GM18951 (cell line): ENCODE measurements at regions of chr3 and their contacts with region 1.

Region 1: DNA sequence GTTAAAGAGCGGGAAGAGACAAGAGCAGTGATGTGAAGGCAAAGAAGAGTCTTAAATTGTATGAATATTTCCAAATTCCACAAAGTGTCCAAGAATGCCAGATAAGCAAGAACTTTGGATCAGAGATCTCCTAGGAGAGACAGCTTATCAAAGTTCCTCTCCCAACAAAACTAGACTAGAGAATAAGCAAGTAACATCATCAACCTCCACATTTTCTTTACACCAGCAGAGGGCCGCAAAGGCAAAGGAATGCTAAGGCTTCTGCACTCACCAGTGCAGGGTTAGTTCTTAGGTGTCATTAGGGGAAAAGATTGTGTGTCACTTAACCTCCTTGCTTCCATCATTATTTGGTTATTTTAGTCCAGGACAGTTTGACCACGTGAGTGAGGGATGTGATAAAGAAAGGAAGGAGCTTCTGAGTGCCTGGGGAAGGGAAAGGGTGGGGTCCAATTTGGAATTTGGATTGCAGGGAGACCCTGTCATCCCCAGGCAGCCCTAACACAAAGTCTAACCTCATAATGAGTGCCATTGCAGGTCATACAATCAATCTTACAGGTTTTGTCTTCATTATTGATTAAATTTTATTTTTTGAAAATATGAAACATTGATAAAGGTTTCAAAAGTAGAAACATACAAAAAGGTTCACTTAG is 7.5 kb upstream of the CMTM6 start:
- POLR2A ChIP-seq: no peak

Region 2: DNA sequence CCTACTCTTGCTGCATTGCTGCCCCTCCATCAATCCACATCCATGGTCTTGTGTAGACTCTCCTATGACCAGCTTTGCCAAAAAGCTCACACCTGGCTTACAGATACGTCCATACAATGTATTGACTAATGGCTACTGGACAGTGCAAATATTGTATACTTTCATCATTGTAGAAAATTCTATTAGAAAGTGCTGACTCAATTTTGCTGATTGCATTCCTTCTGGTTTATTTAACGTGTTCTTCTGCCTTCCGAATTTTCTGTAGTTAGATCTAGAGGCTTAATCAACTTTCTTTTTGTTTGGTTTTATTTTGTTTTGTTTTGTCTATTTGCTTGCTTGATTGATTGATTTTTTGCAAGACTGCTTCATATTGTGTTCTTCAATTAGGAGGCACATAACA is 145.0 kb after region 1 on chr3:
- in situ Hi-C with region 1: loop called (anchors 5 kb)
- POLR2A ChIP-seq: no peak

Region 3: GRCh38 chr3:32882603-32883025 is 372.4 kb after region 1 on chr3:
- in situ Hi-C with region 1: loop called (anchors 25 kb)
- POLR2A ChIP-seq: no peak

Region 4: GRCh38 chr3:32913790-32914446 is 403.7 kb after region 1 on chr3:
- in situ Hi-C with region 1: no loop called
- POLR2A ChIP-seq: no peak